ENCODE measurements at regions of chr16 and their contacts with region 1.

Region 1: DNA sequence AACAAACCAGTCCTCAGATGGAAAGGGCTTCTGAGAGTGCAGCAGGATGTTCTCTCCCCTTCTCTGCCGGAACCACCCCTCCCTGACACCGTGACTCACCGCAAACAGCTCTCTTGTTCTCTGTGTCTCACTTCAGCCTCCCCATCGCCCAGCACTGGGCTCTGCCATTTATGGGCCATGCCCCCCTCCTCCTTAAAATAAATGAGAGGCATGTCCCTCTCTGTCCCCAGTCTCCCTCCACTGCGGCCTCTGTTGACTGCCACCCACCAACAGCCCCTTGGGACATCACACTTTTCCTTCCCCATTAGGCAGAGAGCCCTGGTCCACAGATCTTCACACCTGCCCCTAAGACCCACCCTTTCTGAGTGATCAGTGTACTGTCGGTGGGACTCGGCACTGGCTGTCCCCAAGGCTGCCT is 6.3 kb downstream of the CCDC102A start:
- DNase-seq: peak in 8 of 9 donors; percentile 56 to 83 (median 68)
- ATAC-seq: peak; percentile 91
- H3K4me3 ChIP-seq: peak overlapping the region; percentile 45
- H3K4me3 Mint-ChIP-seq: peak overlapping the region; percentile 61 to 88 (median 83)
- H3K27ac ChIP-seq: peak overlapping the region; percentile 87
- H3K27ac Mint-ChIP-seq: peak overlapping the region; percentile 85 to 99 (median 96)
- H3K4me1 ChIP-seq: peaks cover 41 to 54% of the 10 kb centered on the region in 2 donors
- H3K4me1 Mint-ChIP-seq: peaks cover 49 to 61% (median 59%) of the 10 kb centered on the region in 7 donors
- H3K27me3 ChIP-seq: no peaks in the 10 kb centered on the region
- H3K27me3 Mint-ChIP-seq: no peaks in the 10 kb centered on the region

Region 2: DNA sequence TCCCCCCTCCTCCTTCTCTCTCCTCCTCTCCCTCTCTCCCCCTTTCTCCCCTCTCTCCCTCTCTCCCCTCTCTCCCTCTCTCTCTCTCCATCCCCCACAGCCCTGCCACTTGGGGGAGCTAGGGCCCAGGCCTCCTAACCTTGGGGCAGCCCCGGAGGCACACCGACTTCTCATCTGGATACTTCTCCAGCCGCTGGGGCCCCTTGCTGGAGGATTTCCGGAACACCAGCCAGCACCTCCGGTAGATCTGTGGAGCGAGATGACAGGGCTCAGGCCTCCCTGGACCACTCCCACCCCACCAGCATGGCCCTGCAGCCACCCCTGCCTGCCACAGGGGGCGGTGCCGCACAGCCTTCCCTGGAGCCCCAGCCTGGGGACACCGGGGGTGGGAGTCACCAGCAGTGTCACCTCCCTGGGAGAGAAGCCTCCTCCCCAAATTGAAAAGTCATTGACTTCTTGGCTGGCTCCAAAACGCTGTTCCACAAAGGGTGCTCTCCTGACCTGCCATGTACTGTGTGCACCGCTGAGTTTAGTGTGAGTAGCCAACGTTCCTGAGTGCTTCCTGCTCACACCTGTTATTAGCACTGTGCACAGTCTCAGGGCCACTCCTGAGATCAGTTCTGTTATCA is 54.3 kb before region 1 on chr16:
- CTCF ChIA-PET with region 1: no interaction called
- POLR2A ChIA-PET with region 1: no interaction called
- intact Hi-C with region 1: no loop called
- DNase-seq: peak; percentile 62 to 88 (median 74)
- ATAC-seq: peak; percentile 95
- H3K4me3 ChIP-seq: no peak overlapping the region
- H3K4me3 Mint-ChIP-seq: peak overlapping the region in 8 of 10 donors; percentile 24 to 73 (median 44)
- H3K27ac ChIP-seq: peak overlapping the region; percentile 45
- H3K27ac Mint-ChIP-seq: peak overlapping the region in 3 of 9 donors; percentile 60 to 70 (median 64)
- H3K4me1 ChIP-seq: peaks cover 7 to 8% of the 10 kb centered on the region in 2 donors
- H3K4me1 Mint-ChIP-seq: peaks cover 13 to 26% (median 17%) of the 10 kb centered on the region in 7 donors
- H3K27me3 ChIP-seq: no peaks in the 10 kb centered on the region
- H3K27me3 Mint-ChIP-seq: peaks cover 0 to 2% (median 0%) of the 10 kb centered on the region in 5 donors

Region 3: DNA sequence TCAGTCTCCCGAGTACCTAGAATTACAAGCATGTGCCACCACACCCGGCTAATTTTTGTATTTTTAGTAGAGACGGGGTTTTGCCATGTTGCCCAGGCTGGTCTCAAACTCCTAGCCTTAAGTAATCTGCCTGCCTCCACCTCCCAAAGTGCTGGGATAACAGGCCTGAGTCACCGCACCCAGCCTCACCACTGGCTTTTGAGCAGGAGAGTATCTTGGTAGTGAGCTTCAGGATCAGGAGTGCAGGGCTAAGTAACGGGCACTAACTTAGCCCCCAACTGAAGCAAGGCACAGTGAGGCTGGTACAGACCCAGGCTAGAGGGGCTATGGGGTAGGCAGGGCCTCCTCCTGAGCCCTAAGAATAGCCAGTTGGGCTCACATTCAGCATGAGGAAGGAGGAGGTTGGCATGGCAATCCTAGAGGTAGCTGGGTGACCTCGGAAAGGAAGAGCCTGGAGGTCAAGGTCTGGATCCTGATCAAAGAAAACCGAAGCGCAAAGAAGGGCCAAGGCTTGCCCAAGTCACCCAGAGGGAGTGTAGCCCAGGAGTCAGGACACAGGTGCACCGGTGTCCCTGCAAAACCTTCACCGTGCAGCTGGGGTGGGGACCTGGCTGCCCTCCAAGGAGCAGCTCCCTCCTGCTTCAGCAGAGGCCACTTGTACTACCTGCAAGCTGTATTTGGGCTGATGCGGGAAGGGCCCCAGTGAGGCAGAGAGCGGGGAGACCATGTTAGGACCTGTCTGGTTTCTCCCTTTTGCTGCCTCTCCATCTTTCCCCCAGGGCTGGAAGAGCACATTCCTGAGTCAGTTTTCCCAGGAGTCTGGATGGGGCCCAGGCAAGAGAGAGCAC is 11.0 kb after region 1 on chr16:
- CTCF ChIA-PET with region 1: interaction called, 3 read pairs
- POLR2A ChIA-PET with region 1: interaction called, 16 read pairs
- intact Hi-C with region 1: no loop called
- DNase-seq: peak in 1 of 9 donors; percentile 20
- ATAC-seq: no peak
- H3K4me3 ChIP-seq: no peak overlapping the region
- H3K4me3 Mint-ChIP-seq: peak overlapping the region in 2 of 10 donors; percentile 38 to 62
- H3K27ac ChIP-seq: no peak overlapping the region
- H3K27ac Mint-ChIP-seq: peak overlapping the region in 3 of 9 donors; percentile 38 to 67 (median 65)
- H3K4me1 ChIP-seq: peaks cover 29 to 44% of the 10 kb centered on the region in 2 donors
- H3K4me1 Mint-ChIP-seq: peaks cover 48 to 69% (median 56%) of the 10 kb centered on the region in 7 donors
- H3K27me3 ChIP-seq: no peaks in the 10 kb centered on the region
- H3K27me3 Mint-ChIP-seq: peaks cover 0 to 3% (median 0%) of the 10 kb centered on the region in 5 donors

Region 4: DNA sequence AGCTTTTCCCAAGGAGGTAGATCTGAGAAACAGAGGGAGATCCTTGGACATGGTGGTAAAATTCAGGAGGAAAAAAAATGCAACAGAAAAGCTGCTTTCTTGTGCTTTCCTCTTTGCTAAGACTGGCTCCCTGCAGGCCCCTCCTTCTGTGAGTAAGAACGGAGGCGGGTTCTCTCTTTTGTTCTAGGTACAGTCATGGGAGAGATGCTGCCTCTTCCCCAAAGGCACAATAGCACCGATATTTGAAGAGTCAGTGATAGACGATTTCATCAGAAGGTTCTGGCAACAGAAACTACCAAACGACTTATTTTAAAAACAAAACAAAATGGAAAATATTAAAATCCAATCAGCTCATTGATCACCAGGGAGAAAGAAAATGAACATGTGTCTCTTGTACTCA is 304.8 kb after region 1 on chr16:
- CTCF ChIA-PET with region 1: no interaction called
- POLR2A ChIA-PET with region 1: no interaction called
- intact Hi-C with region 1: no loop called
- DNase-seq: no peak
- ATAC-seq: no peak
- H3K4me3 ChIP-seq: no peak overlapping the region
- H3K4me3 Mint-ChIP-seq: no peak overlapping the region
- H3K27ac ChIP-seq: no peak overlapping the region
- H3K27ac Mint-ChIP-seq: no peak overlapping the region
- H3K4me1 ChIP-seq: no peaks in the 10 kb centered on the region
- H3K4me1 Mint-ChIP-seq: no peaks in the 10 kb centered on the region
- H3K27me3 ChIP-seq: no peaks in the 10 kb centered on the region
- H3K27me3 Mint-ChIP-seq: peaks cover 0 to 15% (median 0%) of the 10 kb centered on the region in 5 donors